PC-3 (cell line): ENCODE measurements at regions of chr2 and their contacts with region 1.

Region 1: GRCh38 chr2:219253753-219254590 is at the start of gene TUBA4A:
- DNase-seq: peak; percentile 90
- ATAC-seq: peak; percentile 58
- H3K4me3 ChIP-seq: peak within 1 kb of the TSS; percentile 74
- H3K27ac ChIP-seq: peak within 1 kb of the TSS; percentile 33
- H3K4me1 ChIP-seq: peaks cover 38% of the 10 kb centered on the region
- H3K27me3 ChIP-seq: no peaks in the 10 kb centered on the region
- CTCF ChIP-seq: no peak
- total RNA-seq, gene TUBA4A: 75.4 and 87.9 TPM in 2 replicates

Region 2: GRCh38 chr2:219218732-219219701 is 35.0 kb before region 1 on chr2 and contains the start of gene ABCB6:
- CTCF ChIA-PET with region 1: no interaction called
- POLR2A ChIA-PET with region 1: interaction called, 23 read pairs
- intact Hi-C with region 1: loop called (anchors 1 kb)
- DNase-seq: peak; percentile 83
- ATAC-seq: peak; percentile 66
- H3K4me3 ChIP-seq: peak within 1 kb of the TSS; percentile 69
- H3K27ac ChIP-seq: peak within 1 kb of the TSS; percentile 77
- H3K4me1 ChIP-seq: peaks cover 19% of the 10 kb centered on the region
- H3K27me3 ChIP-seq: no peaks in the 10 kb centered on the region
- CTCF ChIP-seq: no peak
- total RNA-seq, gene ABCB6: 21.1 and 23.9 TPM in 2 replicates

Region 3: DNA sequence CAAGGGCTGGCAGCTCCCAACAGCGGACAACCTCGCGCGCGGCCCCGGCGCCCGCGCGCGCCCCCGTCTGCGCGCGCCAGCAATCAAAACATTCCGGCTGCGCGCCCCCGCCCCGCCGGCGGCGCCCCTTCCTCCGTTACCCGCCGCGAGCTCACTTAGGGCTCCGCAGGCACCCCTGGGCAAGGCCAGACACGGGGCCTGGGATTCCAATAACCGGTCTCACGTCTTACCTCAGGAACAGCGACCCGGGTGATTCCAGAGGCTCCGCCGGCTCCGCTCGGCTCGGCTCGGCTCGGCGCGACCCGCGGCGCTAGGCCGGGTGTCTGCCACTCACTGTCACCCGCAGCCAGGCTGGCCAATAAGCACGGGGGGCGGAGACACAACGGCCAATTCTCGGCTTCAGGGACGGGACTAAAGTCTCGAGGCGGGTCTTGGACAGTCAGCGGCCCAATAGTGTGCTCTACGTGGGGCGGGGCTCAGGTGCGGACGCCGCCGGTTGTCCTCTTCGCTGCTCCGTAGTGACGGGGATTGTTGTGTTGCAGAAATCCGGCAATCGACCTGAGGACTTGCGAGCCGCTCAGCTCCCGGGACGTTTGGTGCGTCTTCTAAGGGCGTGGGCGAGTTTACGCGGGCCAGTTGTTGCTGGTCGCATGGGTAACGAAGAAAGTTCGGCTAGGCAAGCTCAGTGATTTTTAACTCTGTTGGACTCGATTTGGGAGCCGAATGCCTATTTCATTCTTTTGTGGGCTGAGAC is 24.5 kb before region 1 on chr2 and contains the starts of genes ANKZF1 and ATG9A:
- CTCF ChIA-PET with region 1: interaction called, 6 read pairs
- POLR2A ChIA-PET with region 1: interaction called, 5 read pairs
- intact Hi-C with region 1: loop called (anchors 1 kb)
- DNase-seq: peak; percentile 99
- ATAC-seq: peak; percentile 97
- H3K4me3 ChIP-seq: peak within 1 kb of the TSS; percentile 74
- H3K27ac ChIP-seq: peak within 1 kb of the TSS; percentile 54
- H3K4me1 ChIP-seq: peaks cover 17% of the 10 kb centered on the region
- H3K27me3 ChIP-seq: no peaks in the 10 kb centered on the region
- CTCF ChIP-seq: no peak
- total RNA-seq, gene ANKZF1: 67.9 and 78.5 TPM in 2 replicates
- total RNA-seq, gene ATG9A: 59.6 and 77.2 TPM in 2 replicates

Region 4: DNA sequence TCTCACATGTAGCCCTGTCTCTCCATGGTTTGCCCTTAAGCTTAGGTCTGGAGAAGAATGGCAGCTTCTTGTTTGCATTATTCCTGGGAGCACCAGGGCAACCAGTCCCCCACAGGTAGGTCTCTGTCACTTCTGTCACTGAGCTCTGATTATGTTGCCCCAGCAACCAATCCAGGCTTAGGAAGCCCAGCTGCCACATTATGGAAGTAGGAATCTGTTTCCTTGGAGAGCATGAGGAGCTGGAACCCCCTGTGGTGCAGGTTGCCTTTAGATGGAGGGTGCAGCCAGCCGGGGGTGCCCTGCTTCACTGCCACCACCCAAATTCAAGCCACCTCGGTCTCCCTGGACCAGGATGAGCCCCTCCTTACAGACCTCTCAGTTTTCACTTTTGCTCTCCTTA is 73.7 kb after region 1 on chr2:
- CTCF ChIA-PET with region 1: no interaction called
- POLR2A ChIA-PET with region 1: no interaction called
- intact Hi-C with region 1: no loop called
- DNase-seq: no peak
- ATAC-seq: no peak
- H3K4me3 ChIP-seq: no peak overlapping the region
- H3K27ac ChIP-seq: no peak overlapping the region
- H3K4me1 ChIP-seq: no peaks in the 10 kb centered on the region
- H3K27me3 ChIP-seq: peaks cover 29% of the 10 kb centered on the region
- CTCF ChIP-seq: no peak